Heart left ventricle (tissue), 16 donors: ENCODE measurements at regions of chr10 and their contacts with region 1.

Region 1: GRCh38 chr10:16699435-16700057 is 117.7 kb downstream of the RSU1 start:
- DNase-seq: no peak
- ATAC-seq: no peak
- H3K4me3 ChIP-seq: no peak overlapping the region
- H3K27ac ChIP-seq: no peak overlapping the region
- H3K4me1 ChIP-seq: no peaks in the 10 kb centered on the region
- H3K27me3 ChIP-seq: no peaks in the 10 kb centered on the region
- CTCF ChIP-seq: no peak
- POLR2A ChIP-seq: no peak

Region 2: DNA sequence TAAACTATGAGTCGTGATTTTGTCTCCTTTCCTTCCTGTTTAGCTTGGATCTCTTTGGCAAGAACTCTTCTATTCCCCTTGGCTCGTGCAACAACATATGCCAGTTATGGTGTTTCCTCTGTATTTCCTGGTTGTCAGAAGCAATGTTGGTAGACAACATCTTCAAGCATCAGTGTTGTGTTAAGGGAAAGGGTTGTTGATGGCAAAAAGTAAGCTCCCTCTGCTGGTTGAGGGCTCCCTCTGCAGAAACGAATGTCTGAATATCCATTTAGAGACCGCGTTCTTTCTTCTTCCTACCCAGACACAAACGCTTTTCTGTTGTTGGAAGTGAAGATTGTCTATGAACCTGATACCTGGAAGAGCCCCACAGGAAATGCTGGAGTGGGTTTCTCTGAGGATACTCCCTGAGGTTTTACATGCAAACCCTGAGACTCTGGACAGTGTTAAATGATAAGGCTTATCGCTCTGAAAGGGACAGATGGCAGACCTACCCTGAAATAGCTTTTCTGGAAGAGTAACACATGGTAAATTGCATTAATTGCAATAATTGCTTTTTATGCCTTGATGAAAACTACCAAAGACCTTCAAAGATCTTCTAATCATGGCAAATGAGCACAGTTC is 154.3 kb before region 1 on chr10:
- intact Hi-C with region 1: loop called in 1 of 10 experiments (anchors 10 kb)
- DNase-seq: no peak
- ATAC-seq: peak in 1 of 4 donors; percentile 61
- H3K4me3 ChIP-seq: no peak overlapping the region
- H3K27ac ChIP-seq: no peak overlapping the region
- H3K4me1 ChIP-seq: peaks cover 0 to 5% (median 0%) of the 10 kb centered on the region in 12 donors
- H3K27me3 ChIP-seq: peaks cover 0 to 12% (median 0%) of the 10 kb centered on the region in 9 donors
- CTCF ChIP-seq: peak; percentile 35 to 63 (median 50)
- POLR2A ChIP-seq: no peak

Region 3: GRCh38 chr10:17292375-17292774 is 592.8 kb after region 1 on chr10:
- intact Hi-C with region 1: no loop called
- DNase-seq: no peak
- ATAC-seq: no peak
- H3K4me3 ChIP-seq: no peak overlapping the region
- H3K27ac ChIP-seq: no peak overlapping the region
- H3K4me1 ChIP-seq: no peaks in the 10 kb centered on the region
- H3K27me3 ChIP-seq: peaks cover 0 to 4% (median 0%) of the 10 kb centered on the region in 9 donors
- CTCF ChIP-seq: no peak
- POLR2A ChIP-seq: no peak